ENCODE measurements at regions of chr11 and their contacts with region 1.

Region 1: DNA sequence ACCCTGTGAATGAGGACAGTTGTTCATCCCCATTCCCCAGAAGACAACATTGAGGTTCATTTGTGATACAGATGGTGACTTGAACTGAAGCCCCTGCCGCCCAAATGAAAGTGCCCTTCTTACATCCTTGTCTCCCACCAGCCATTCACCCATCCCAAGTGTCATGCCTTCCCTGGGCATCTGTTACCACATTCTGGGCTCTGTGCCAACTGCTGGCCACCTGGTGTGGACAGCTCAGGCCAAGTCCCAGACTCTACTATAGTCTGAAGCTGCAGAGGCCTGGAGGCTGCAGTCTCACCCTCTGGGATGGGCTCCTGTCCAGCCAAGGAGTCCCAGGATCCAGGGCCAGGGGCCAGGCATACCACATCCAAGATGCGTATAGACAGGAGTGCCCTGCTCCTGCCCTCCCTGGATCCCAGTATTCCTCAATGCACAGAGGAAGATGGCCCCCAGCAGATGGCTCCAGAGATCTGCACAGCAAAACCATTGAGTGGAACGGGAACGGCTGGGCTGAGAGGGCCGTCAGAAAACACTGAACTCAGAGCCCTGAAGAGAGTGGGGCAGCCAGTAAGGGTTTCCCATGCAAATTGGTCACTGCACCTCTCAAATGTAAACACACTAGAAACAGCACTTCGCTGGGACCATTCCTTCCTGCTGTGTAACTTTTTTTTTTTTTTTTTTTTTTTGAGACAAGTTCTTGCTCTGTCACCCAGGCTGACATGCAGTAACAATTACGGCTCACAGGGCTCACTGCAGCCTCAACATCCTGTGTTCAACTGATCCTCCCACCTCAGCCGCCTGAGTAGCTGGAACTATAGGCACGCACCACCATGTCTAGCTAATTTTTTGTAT is 22.8 kb downstream of the ARRB1 start:
- DNase-seq: peak; percentile 40
- H3K4me3 ChIP-seq: no peak overlapping the region
- CTCF ChIP-seq: peak; percentile 85

Region 2: DNA sequence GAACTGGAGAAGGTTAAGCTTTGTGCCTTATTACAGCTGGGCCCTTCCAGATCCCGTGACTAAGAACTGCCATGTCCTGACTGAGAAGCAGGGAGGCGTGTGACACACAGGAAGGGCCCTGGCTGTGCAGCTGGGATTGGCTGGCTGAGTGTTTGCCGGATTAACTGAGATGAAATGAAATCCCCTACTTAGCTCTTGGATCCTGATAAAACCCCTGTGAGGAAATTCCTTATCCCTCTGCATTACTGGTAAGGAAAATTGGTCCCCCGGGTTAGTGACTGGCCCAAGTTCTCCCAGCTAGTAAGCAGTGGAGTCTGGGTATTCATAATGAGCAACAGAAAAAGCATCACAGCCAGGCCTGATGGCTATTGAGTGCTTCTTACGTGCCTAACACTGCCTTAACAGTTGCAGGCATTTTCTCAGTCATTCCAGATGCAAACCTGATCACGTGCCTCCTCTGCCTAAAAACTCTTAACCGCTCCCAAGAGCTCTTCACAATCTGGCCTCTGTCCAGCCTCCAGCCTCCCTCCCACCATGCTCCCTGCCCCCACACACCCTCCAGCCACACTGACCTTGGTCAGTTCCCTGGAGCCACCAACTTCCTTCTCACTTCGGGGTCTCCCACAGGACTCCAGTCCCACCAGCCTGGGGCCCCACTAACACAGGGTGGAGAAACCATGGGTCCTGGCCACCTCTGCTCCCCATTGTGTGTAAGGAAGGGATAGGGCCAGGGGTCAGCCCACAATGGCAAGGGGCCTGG is 15.0 kb before region 1 on chr11:
- CTCF ChIA-PET with region 1: interaction called, 10 read pairs
- POLR2A ChIA-PET with region 1: no interaction called
- DNase-seq: no peak
- H3K4me3 ChIP-seq: no peak overlapping the region
- CTCF ChIP-seq: no peak

Region 3: DNA sequence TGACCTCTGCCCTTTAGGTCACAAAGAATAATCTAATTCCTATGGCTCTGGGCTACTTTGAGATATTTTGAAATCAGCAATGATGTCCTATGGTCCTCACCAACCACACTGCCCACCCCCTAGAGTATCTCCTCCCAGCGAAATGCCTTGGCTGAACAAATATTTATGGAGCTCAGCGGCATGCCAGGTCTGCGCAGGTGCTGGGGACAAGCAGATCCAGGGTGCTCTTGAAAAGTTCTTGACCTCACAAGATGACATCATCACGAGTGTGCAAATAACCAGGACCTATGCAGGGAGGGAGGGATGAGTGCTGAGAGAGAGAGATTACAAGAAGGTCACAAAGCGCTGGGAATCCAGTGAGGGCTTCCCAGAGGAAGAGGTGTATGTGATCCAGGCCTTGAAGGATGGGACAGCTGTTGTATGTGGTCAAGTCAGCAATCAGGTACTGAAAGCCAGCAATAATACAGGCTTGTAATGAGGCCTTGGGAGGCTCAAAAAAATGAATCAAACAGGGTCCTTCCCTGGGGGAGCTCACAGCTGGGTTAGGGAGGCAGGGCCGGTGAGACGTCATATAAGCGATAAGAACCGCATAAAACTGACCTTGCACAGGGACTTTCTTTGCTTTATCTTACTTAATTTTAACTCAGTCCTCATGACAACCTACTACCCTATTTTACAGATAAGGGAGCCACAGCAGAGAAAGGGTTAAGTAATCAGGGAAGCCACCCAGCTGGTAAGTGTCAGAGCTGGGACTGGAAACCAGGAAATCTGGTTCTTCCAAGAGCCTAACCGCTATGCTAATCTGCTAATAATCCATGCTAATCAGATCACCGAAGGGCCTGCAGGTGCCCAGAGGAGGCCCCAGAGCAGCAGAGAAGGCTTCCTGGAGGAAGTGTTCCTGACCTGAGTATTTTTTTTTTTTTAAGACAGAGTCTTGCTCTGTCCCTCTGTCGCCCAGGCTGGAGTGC is 14.5 kb after region 1 on chr11:
- CTCF ChIA-PET with region 1: interaction called, 25 read pairs
- POLR2A ChIA-PET with region 1: interaction called, 8 read pairs
- DNase-seq: no peak
- H3K4me3 ChIP-seq: no peak overlapping the region
- CTCF ChIP-seq: no peak

Region 4: GRCh38 chr11:75492181-75492820 is 163.6 kb after region 1 on chr11:
- CTCF ChIA-PET with region 1: no interaction called
- POLR2A ChIA-PET with region 1: no interaction called
- DNase-seq: no peak
- H3K4me3 ChIP-seq: no peak overlapping the region
- CTCF ChIP-seq: no peak